Upper lobe of right lung (tissue), 1 donor: ENCODE measurements at regions of chr17 and their contacts with region 1.

Region 1: GRCh38 chr17:59311130-59311920 is 20.1 kb upstream of the YPEL2 start:
- DNase-seq: no peak
- ATAC-seq: peak; percentile 98
- H3K4me3 ChIP-seq: no peak overlapping the region
- H3K27ac ChIP-seq: no peak overlapping the region
- H3K4me1 ChIP-seq: peaks cover 7% of the 10 kb centered on the region
- H3K27me3 ChIP-seq: no peaks in the 10 kb centered on the region
- CTCF ChIP-seq: peak; percentile 87

Region 2: GRCh38 chr17:59440784-59441441 is 129.6 kb after region 1 on chr17:
- intact Hi-C with region 1: loop called (anchors 5 kb)
- DNase-seq: peak; percentile 78
- ATAC-seq: peak; percentile 98
- H3K4me3 ChIP-seq: no peak overlapping the region
- H3K27ac ChIP-seq: no peak overlapping the region
- H3K4me1 ChIP-seq: peaks cover 25% of the 10 kb centered on the region
- H3K27me3 ChIP-seq: no peaks in the 10 kb centered on the region
- CTCF ChIP-seq: peak; percentile 90